GM10248 (cell line): ENCODE measurements at regions of chr15 and their contacts with region 1.

Region 1: GRCh38 chr15:77496710-77497103 is 76.0 kb downstream of the HMG20A start:
- DNase-seq: peak; percentile 81
- CTCF ChIP-seq: peak; percentile 90

Region 2: GRCh38 chr15:77107531-77108355 is 389.0 kb before region 1 on chr15:
- CTCF ChIA-PET with region 1: interaction called, 18 read pairs
- POLR2A ChIA-PET with region 1: no interaction called
- DNase-seq: peak; percentile 66
- CTCF ChIP-seq: peak; percentile 68

Region 3: DNA sequence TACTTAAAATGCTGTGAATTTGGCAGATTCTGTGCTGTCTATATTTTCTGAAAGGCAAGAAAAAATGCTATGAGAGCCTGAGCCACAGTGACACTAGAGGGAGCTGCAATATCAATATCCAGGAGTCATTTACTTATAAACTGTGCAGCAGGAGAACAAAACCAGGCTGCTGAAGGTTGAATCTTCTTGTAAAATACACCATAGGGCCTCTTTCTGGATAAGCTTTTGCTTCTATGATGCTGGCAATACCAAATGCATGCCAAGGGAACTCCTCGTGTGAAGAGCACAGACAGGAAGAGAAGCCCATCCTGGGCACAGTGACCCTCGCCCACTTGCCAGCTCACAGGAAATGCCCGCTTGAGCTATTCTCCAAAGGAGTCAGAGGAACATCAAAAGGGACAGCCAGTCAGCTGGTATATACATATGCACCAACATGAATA is 377.8 kb before region 1 on chr15:
- CTCF ChIA-PET with region 1: interaction called, 67 read pairs
- POLR2A ChIA-PET with region 1: no interaction called
- DNase-seq: peak; percentile 60
- CTCF ChIP-seq: peak; percentile 81

Region 4: DNA sequence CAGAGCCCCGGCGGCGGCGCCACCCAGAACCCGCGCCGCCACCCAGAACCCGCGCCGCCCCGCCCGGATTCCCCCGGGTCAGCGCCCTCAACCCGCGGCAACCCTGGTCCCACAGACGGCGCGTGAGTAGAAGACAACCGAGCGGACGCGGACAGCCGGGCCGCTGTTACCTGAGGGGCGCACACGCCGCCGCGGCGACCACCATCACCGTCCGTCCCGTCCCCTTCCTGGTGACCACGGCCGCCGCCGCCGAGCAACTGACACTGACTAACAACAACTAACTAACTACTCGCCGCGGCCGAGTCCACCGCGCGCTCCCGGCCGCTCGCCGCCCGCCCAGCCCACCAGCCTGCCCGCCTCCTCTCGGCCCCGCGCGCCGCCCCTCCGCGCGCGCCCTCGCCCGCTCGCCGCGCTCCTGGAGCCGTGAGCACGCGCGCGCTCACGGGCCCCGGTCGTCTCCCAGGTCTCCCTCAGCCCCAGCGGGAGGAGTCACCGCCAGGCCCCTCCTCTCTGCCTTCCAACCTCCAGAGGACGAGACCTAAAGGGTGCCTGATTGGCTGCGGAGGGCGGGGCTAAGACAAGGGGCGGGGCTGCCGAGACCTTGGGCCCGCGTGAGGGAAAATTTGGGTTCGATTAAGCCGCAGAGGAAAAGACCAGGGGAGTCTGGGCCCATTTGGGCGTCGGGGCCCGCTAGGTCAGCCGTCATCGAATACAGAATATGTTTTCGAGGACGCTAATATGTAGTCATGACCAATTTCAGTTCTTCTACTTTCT is 76.7 kb before region 1 on chr15 and contains the start of gene PEAK1:
- CTCF ChIA-PET with region 1: interaction called, 10 read pairs
- POLR2A ChIA-PET with region 1: no interaction called
- DNase-seq: peak; percentile 97
- CTCF ChIP-seq: no peak

Region 5: GRCh38 chr15:77482570-77482969 is 14.1 kb before region 1 on chr15:
- CTCF ChIA-PET with region 1: interaction called, 54 read pairs
- POLR2A ChIA-PET with region 1: no interaction called
- DNase-seq: no peak
- CTCF ChIP-seq: no peak

Region 6: GRCh38 chr15:77599899-77600298 is 103.2 kb after region 1 on chr15:
- CTCF ChIA-PET with region 1: no interaction called
- POLR2A ChIA-PET with region 1: no interaction called
- DNase-seq: no peak
- CTCF ChIP-seq: no peak